Calu3 (cell line): ENCODE measurements at regions of chr5 and their contacts with region 1.

Region 1: GRCh38 chr5:60843936-60844905 is at the start of gene ELOVL7:
- DNase-seq: peak; percentile 97
- H3K4me3 Mint-ChIP-seq: peak within 1 kb of the TSS; percentile 90
- H3K27ac Mint-ChIP-seq: peak within 1 kb of the TSS; percentile 83
- H3K4me1 Mint-ChIP-seq: peaks cover 27% of the 10 kb centered on the region
- H3K27me3 Mint-ChIP-seq: no peaks in the 10 kb centered on the region
- CTCF ChIP-seq: peak; percentile 55
- total RNA-seq, gene ELOVL7: 40.5 and 42.7 TPM in 2 replicates

Region 2: DNA sequence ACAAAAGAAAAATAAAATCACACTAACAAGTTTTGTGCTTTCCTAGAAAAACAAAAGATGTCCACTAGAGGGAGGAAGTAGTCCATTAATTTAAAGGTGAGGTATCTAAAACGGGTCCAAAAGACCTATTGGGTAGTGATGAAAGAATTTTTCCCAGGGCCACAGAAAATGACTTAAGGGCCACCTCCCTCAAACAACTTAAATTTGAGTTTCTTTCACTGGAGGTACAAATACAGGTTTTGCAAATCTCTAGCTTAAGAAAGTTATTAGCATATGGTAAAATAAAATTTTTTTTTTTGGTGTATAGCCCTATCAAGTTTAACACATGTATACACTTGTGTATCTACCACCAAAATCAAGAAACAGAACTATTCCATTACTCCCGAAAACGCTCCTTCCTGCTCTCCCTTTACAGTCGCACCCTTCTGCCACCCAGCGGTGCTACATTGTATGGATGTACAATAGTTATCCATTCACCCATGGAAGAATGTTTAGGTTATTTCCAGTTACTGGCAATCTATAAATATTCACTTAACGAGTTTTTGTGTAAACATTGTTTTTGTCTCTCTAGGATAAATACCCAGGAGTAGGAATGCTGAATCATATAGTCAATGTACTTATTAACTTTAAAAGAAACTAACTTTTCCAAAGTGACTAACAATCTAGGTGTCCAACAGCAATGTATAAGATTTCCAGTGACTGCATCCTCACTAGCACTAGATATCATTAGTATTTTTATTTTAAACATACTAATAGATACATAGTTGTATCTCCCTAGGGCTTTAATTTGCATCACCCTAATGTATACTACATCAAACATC is 166.2 kb before region 1 on chr5:
- CTCF ChIA-PET with region 1: interaction called, 3 read pairs
- intact Hi-C with region 1: loop called (anchors 2 kb)
- DNase-seq: no peak
- H3K4me3 Mint-ChIP-seq: peak overlapping the region; percentile 45
- H3K27ac Mint-ChIP-seq: peak overlapping the region; percentile 35
- H3K4me1 Mint-ChIP-seq: peaks cover 77% of the 10 kb centered on the region
- H3K27me3 Mint-ChIP-seq: no peaks in the 10 kb centered on the region
- CTCF ChIP-seq: peak; percentile 54

Region 3: DNA sequence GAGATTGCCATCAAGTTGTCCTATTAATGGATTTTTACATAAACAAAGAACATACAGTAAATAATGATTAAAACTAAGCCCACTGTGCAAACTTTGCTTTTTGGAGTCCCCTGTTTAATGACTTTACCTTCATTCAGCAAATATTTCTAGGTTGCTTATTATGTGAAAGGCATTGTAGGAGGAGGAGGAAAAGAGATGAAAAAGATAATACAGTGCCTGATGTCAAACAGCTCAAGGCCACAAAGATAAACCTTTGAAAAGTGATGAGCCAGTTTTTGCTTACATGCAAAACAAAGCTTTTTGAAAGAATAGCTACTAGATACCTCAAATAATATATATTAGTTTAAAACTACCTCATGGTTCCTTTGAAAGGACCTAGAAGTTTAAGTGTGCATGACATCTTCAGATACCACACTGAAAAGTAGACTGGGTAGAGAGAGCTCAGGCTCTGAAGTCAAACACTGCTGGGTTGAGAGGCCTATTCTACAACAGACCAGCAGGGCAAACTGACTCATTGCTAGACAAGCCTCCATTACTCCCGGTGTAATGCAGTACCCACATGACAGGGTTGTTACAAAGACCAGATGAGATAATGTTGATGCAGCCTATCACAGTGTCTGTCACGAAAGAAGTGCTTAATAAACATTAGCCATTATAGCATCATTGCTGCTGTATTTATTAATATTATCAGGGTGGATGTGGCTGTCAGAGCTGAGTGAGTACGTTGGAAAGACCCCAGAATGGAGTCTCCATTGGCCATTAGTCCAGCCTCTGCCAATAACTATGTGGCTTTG is 156.1 kb before region 1 on chr5:
- CTCF ChIA-PET with region 1: interaction called, 3 read pairs
- intact Hi-C with region 1: loop called (anchors 5 kb)
- DNase-seq: peak; percentile 43
- H3K4me3 Mint-ChIP-seq: no peak overlapping the region
- H3K27ac Mint-ChIP-seq: no peak overlapping the region
- H3K4me1 Mint-ChIP-seq: peaks cover 63% of the 10 kb centered on the region
- H3K27me3 Mint-ChIP-seq: no peaks in the 10 kb centered on the region
- CTCF ChIP-seq: peak; percentile 66

Region 4: DNA sequence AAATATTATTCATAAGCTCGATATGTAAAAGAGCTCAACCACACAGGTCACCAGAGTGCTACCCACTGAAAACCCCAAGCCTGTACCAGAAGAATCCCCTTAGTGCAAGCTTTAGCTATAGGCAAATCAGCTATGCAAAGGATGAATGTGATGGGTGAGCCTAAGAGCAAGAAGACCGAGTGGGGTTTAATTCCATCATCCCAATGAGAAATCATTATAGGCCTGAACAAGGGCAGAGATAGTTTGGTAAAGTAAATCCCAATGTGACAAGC is 22.0 kb before region 1 on chr5:
- CTCF ChIA-PET with region 1: interaction called, 10 read pairs
- intact Hi-C with region 1: no loop called
- DNase-seq: no peak
- H3K4me3 Mint-ChIP-seq: no peak overlapping the region
- H3K27ac Mint-ChIP-seq: no peak overlapping the region
- H3K4me1 Mint-ChIP-seq: no peaks in the 10 kb centered on the region
- H3K27me3 Mint-ChIP-seq: no peaks in the 10 kb centered on the region
- CTCF ChIP-seq: no peak

Region 5: DNA sequence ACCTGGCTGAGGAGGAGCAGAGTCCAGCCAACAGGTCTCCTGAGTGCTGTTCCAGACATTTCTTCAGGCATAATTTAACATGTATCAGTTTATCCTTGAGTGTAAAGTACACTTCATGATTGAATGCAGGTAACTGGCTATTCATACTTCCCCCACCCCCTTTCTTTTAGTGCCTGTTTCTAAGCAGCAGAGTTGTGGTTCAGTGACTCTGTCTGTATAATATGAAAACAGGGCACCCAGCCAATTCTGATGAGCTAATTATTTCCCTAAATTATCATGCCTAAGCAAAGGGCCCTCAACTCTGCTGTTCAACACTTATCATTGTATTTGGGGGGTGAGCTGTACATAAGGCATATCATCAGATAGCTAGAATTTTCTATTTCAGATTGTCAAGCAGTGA is 436.0 kb after region 1 on chr5:
- CTCF ChIA-PET with region 1: no interaction called
- intact Hi-C with region 1: no loop called
- DNase-seq: peak; percentile 70
- H3K4me3 Mint-ChIP-seq: peak overlapping the region; percentile 8
- H3K27ac Mint-ChIP-seq: peak overlapping the region; percentile 56
- H3K4me1 Mint-ChIP-seq: peaks cover 35% of the 10 kb centered on the region
- H3K27me3 Mint-ChIP-seq: no peaks in the 10 kb centered on the region
- CTCF ChIP-seq: no peak